ENCODE measurements at regions of chr4 and their contacts with region 1.

Region 1: DNA sequence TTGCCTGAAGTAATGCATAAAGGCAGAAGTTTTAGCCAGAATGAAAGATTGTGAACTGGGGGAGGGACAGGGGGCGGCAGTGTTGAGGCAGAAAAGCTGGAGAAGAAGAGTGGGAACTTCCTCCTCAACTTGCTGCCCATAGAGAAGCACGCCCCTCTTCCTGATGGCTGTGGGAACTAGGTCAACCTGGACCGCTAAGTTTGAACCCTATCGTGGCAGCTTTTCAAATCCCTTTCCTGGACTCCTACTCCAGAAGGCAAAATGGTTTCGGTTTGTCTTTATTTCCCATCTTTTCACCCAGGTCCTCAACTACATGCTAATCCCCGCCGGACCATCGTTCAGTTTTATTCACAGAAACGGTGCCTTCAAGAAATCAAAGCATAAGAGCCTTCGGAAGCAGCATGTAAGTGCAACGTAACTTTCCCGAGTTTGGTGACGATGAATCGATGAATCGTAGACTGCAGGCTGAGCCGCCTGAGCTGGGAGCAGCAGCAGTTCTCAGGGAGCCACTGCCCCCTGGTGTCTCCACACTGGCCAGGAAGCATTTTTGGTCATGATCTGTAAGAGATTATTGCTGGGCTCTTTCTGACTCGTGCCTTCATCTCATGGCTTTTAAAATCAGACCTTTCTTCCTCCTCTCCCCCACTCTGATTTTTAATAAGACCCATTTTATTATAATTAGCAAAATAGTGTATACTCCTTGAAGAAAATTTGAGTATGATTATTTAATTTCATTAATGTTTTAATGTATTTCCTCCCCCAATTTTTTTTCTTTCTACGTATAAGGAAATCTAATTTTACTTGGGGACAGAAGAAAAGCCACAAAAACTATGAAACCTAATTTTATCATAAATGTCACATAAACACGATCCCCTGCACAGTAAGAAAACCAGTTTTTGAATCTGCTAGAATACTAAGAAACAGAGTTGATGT is 21.4 kb downstream of the SPINK2 start:
- DNase-seq: peak; percentile 79 to 90
- ATAC-seq: peak; percentile 99

Region 2: GRCh38 chr4:56086073-56086521 is 714.0 kb before region 1 on chr4:
- intact Hi-C with region 1: no loop called
- DNase-seq: peak in 1 of 2 donors; percentile 9
- ATAC-seq: peak; percentile 89

Region 3: DNA sequence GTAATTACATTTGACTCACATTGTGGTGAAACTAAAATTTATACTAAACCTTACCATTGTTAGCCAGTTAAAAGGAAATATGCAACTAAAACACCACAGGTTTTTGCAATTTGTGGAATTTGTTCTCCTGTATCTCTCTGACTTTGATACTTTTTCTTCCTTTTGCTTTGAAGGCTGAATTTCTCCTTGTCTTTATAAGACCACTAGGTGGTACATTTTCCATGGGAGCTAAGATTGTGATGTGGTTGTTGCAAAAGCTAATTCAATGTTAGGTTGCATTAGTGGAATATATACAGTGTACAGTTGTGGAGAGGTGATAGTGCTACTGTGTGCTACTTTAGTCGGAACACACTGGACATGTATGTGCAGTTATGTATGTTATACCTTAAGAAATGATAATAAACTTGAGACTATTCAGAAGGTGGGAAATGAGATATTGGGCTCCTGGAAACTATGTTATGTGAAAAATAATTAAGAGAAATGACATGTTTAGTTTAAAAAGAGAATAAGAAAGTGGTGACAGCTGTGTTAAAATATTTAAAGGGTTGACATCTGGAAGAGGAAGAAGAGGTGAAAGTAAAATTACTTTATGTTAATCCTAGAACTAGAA is 224.2 kb before region 1 on chr4:
- intact Hi-C with region 1: loop called in 1 of 2 experiments (anchors 5 kb)
- DNase-seq: no peak
- ATAC-seq: peak; percentile 41

Region 4: GRCh38 chr4:56698329-56698728 is 101.8 kb before region 1 on chr4:
- intact Hi-C with region 1: loop called in 1 of 2 experiments (anchors 10 kb)
- DNase-seq: no peak
- ATAC-seq: no peak

Measured in left colon (tissue), 2 donors.